B cell (primary cell): ENCODE measurements at regions of chr12 and their contacts with region 1.

Region 1: GRCh38 chr12:14157088-14157747 is 175.8 kb upstream of the GRIN2B start:
- DNase-seq: peak; percentile 90
- ATAC-seq: peak; percentile 91
- H3K4me3 ChIP-seq: peak overlapping the region in 1 of 5 experiments; percentile 8
- H3K4me3 Mint-ChIP-seq: peak overlapping the region; percentile 29
- H3K27ac ChIP-seq: peak overlapping the region; percentile 85 to 88
- H3K27ac Mint-ChIP-seq: peak overlapping the region; percentile 90
- H3K4me1 ChIP-seq: peaks cover 63% of the 10 kb centered on the region in 2 donors
- H3K4me1 Mint-ChIP-seq: peaks cover 64% of the 10 kb centered on the region
- H3K27me3 ChIP-seq: no peaks in the 10 kb centered on the region
- H3K27me3 Mint-ChIP-seq: no peaks in the 10 kb centered on the region
- CTCF ChIP-seq: no peak

Region 2: DNA sequence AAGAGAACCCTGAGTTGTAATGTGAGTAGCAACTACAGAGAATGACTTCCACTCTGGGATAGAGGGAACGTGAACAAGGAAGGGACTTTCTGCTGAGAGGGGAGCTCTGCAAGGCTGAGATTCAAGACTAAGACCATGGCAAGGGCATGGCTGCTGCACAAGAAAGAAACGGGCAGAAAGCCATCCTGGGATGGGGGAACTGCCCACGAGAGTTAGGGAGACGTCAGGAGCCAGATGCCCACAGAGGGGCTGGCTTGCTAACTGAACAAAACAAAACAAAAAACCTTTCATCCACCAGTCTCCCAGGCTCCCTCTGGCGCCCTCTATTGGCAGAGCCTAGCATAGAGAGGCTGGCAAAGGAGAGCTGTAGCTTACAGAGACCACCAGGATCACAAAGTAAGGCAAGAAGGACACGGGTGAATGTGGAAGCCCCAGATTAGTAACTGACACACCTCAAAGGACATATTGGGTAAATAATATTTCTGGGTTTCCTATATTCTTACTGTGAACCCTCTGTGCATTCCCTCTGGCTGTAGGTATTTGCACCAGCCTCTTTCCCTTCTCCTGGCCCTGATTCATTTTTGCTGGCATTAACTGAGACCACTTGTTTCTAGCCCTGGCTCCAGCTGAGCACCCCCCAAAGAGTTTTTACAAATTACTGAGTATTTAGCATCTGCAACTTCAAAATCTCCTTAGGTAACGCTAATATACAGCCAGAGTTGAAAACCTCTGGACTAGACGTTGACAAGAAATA is 622.4 kb before region 1 on chr12:
- CTCF ChIA-PET with region 1: no interaction called
- POLR2A ChIA-PET with region 1: interaction called, 7 read pairs
- intact Hi-C with region 1: loop called (anchors 5 kb)
- DNase-seq: peak; percentile 50
- ATAC-seq: no peak
- H3K4me3 ChIP-seq: no peak overlapping the region
- H3K4me3 Mint-ChIP-seq: peak overlapping the region; percentile 30
- H3K27ac ChIP-seq: no peak overlapping the region
- H3K27ac Mint-ChIP-seq: no peak overlapping the region
- H3K4me1 ChIP-seq: peaks cover 43 to 44% of the 10 kb centered on the region in 2 donors
- H3K4me1 Mint-ChIP-seq: peaks cover 45% of the 10 kb centered on the region
- H3K27me3 ChIP-seq: no peaks in the 10 kb centered on the region
- H3K27me3 Mint-ChIP-seq: no peaks in the 10 kb centered on the region
- CTCF ChIP-seq: peak; percentile 64

Region 3: GRCh38 chr12:13864081-13864673 is 293.0 kb before region 1 on chr12:
- CTCF ChIA-PET with region 1: interaction called, 10 read pairs
- POLR2A ChIA-PET with region 1: no interaction called
- intact Hi-C with region 1: no loop called
- DNase-seq: peak; percentile 73
- ATAC-seq: peak; percentile 82
- H3K4me3 ChIP-seq: no peak overlapping the region
- H3K4me3 Mint-ChIP-seq: no peak overlapping the region
- H3K27ac ChIP-seq: no peak overlapping the region
- H3K27ac Mint-ChIP-seq: no peak overlapping the region
- H3K4me1 ChIP-seq: no peaks in the 10 kb centered on the region
- H3K4me1 Mint-ChIP-seq: no peaks in the 10 kb centered on the region
- H3K27me3 ChIP-seq: peaks cover 0 to 16% (median 3%) of the 10 kb centered on the region in 4 experiments
- H3K27me3 Mint-ChIP-seq: peaks cover 52% of the 10 kb centered on the region
- CTCF ChIP-seq: peak; percentile 99

Region 4: GRCh38 chr12:14111230-14111865 is 45.9 kb before region 1 on chr12:
- CTCF ChIA-PET with region 1: interaction called, 211 read pairs
- POLR2A ChIA-PET with region 1: no interaction called
- intact Hi-C with region 1: loop called (anchors 2 kb)
- DNase-seq: peak; percentile 82
- ATAC-seq: peak; percentile 97
- H3K4me3 ChIP-seq: no peak overlapping the region
- H3K4me3 Mint-ChIP-seq: peak overlapping the region; percentile 26
- H3K27ac ChIP-seq: no peak overlapping the region
- H3K27ac Mint-ChIP-seq: peak overlapping the region; percentile 67
- H3K4me1 ChIP-seq: peaks cover 13% of the 10 kb centered on the region in 2 donors
- H3K4me1 Mint-ChIP-seq: peaks cover 13% of the 10 kb centered on the region
- H3K27me3 ChIP-seq: no peaks in the 10 kb centered on the region
- H3K27me3 Mint-ChIP-seq: no peaks in the 10 kb centered on the region
- CTCF ChIP-seq: peak; percentile 76

Region 5: GRCh38 chr12:14193639-14194038 is 36.4 kb after region 1 on chr12:
- CTCF ChIA-PET with region 1: no interaction called
- POLR2A ChIA-PET with region 1: no interaction called
- intact Hi-C with region 1: no loop called
- DNase-seq: no peak
- ATAC-seq: no peak
- H3K4me3 ChIP-seq: no peak overlapping the region
- H3K4me3 Mint-ChIP-seq: no peak overlapping the region
- H3K27ac ChIP-seq: no peak overlapping the region
- H3K27ac Mint-ChIP-seq: no peak overlapping the region
- H3K4me1 ChIP-seq: peaks cover 18 to 22% of the 10 kb centered on the region in 2 donors
- H3K4me1 Mint-ChIP-seq: peaks cover 31% of the 10 kb centered on the region
- H3K27me3 ChIP-seq: no peaks in the 10 kb centered on the region
- H3K27me3 Mint-ChIP-seq: peaks cover 2% of the 10 kb centered on the region
- CTCF ChIP-seq: no peak

Region 6: GRCh38 chr12:14216405-14217294 is 59.4 kb after region 1 on chr12:
- CTCF ChIA-PET with region 1: no interaction called
- POLR2A ChIA-PET with region 1: no interaction called
- intact Hi-C with region 1: loop called (anchors 2 kb)
- DNase-seq: peak; percentile 40
- ATAC-seq: peak; percentile 54
- H3K4me3 ChIP-seq: peak overlapping the region in 4 of 5 experiments; percentile 1 to 62 (median 41)
- H3K4me3 Mint-ChIP-seq: peak overlapping the region; percentile 76
- H3K27ac ChIP-seq: peak overlapping the region in 1 of 2 donors; percentile 36
- H3K27ac Mint-ChIP-seq: peak overlapping the region; percentile 81
- H3K4me1 ChIP-seq: peaks cover 0 to 15% of the 10 kb centered on the region in 2 donors
- H3K4me1 Mint-ChIP-seq: peaks cover 22% of the 10 kb centered on the region
- H3K27me3 ChIP-seq: no peaks in the 10 kb centered on the region
- H3K27me3 Mint-ChIP-seq: no peaks in the 10 kb centered on the region
- CTCF ChIP-seq: no peak

Region 7: DNA sequence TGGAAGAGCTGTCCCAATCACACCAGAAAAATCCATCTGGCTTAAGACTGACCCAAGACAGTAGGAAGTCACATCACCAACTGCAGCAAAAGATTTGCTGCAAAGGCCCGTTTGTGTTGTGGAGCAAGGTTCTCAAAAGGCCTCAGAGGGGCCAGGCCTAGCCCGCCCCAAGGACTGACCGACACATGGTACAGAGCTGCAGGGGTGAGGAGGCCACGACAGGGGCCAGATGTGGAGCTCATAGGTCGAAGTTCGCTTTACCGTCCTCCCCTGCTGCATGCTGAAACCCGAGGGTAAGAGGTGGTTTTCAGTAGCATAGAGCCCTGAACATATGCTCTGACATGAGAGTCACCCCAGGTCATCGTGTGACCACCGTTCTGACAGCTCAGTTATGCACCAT is 374.9 kb after region 1 on chr12:
- CTCF ChIA-PET with region 1: no interaction called
- POLR2A ChIA-PET with region 1: no interaction called
- intact Hi-C with region 1: no loop called
- DNase-seq: no peak
- ATAC-seq: no peak
- H3K4me3 ChIP-seq: no peak overlapping the region
- H3K4me3 Mint-ChIP-seq: no peak overlapping the region
- H3K27ac ChIP-seq: no peak overlapping the region
- H3K27ac Mint-ChIP-seq: no peak overlapping the region
- H3K4me1 ChIP-seq: no peaks in the 10 kb centered on the region
- H3K4me1 Mint-ChIP-seq: no peaks in the 10 kb centered on the region
- H3K27me3 ChIP-seq: no peaks in the 10 kb centered on the region
- H3K27me3 Mint-ChIP-seq: no peaks in the 10 kb centered on the region
- CTCF ChIP-seq: no peak

Region 8: GRCh38 chr12:14613718-14614117 is 456.5 kb after region 1 on chr12:
- CTCF ChIA-PET with region 1: no interaction called
- POLR2A ChIA-PET with region 1: no interaction called
- intact Hi-C with region 1: loop called (anchors 2 kb)
- DNase-seq: peak; percentile 88
- ATAC-seq: peak; percentile 82
- H3K4me3 ChIP-seq: peak overlapping the region in 3 of 5 experiments; percentile 23 to 60 (median 54)
- H3K4me3 Mint-ChIP-seq: peak overlapping the region; percentile 80
- H3K27ac ChIP-seq: peak overlapping the region; percentile 73 to 81
- H3K27ac Mint-ChIP-seq: peak overlapping the region; percentile 92
- H3K4me1 ChIP-seq: peaks cover 28 to 36% of the 10 kb centered on the region in 2 donors
- H3K4me1 Mint-ChIP-seq: peaks cover 34% of the 10 kb centered on the region
- H3K27me3 ChIP-seq: no peaks in the 10 kb centered on the region
- H3K27me3 Mint-ChIP-seq: no peaks in the 10 kb centered on the region
- CTCF ChIP-seq: no peak

Region 9: DNA sequence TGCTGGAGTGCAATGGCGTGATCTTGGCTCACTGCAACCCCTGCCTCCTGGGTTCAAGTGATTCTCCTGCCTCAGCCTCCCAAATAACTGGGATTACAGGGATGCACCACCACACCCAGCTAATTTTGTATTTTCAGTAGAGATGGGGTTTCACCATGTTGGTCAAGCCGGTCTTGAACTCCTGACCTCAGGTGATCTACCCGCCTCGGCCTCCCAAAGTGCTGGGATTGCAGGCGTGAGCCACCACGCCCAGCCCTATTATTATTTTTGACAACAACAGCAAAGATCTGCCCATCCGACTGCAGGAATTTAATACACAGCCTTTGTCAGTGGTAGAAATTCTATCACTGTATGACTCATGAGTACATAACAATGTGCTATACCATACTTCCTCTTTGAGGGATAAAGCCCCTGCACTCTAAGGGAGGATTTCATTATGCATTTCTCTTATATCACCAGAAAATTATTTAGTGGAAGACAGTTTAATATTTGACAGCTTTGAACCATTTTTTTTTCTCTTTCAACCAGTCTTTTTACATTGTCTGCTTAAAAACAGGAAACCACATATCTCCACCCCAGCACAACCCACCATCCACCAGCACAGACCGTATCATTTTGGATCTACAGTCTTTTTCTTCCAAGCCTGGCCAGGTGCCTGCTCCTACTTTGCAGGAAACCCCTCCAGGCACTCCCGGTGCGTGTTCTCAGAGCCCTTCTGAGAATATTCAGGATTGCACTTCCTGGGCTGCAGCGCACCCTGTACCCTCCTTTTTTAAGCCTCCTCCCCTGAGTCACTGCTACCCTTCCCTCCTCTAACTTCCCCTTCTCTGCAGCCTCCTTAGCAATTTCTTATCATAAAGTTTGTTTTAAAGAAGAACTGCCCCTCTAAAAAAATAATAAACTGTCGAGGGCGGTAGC is 803.6 kb after region 1 on chr12:
- CTCF ChIA-PET with region 1: no interaction called
- POLR2A ChIA-PET with region 1: no interaction called
- intact Hi-C with region 1: loop called (anchors 2 kb)
- DNase-seq: no peak
- ATAC-seq: peak; percentile 64
- H3K4me3 ChIP-seq: peak overlapping the region; percentile 65 to 99 (median 84)
- H3K4me3 Mint-ChIP-seq: peak overlapping the region; percentile 97
- H3K27ac ChIP-seq: peak overlapping the region; percentile 68 to 94
- H3K27ac Mint-ChIP-seq: peak overlapping the region; percentile 98
- H3K4me1 ChIP-seq: peaks cover 45 to 55% of the 10 kb centered on the region in 2 donors
- H3K4me1 Mint-ChIP-seq: peaks cover 72% of the 10 kb centered on the region
- H3K27me3 ChIP-seq: no peaks in the 10 kb centered on the region
- H3K27me3 Mint-ChIP-seq: no peaks in the 10 kb centered on the region
- CTCF ChIP-seq: no peak